ENCODE measurements at regions of chr2 and their contacts with region 1.

Region 1: GRCh38 chr2:240566203-240567136 is 1.8 kb upstream of the RNPEPL1 start:
- DNase-seq: peak; percentile 84 to 97
- H3K4me3 ChIP-seq: peak overlapping the region; percentile 71 to 85
- H3K27ac ChIP-seq: peak overlapping the region; percentile 91 to 96
- H3K4me1 ChIP-seq: peaks cover 16 to 32% of the 10 kb centered on the region in 2 donors
- H3K27me3 ChIP-seq: no peaks in the 10 kb centered on the region
- CTCF ChIP-seq: peak; percentile 59 to 76 (median 71)

Region 2: DNA sequence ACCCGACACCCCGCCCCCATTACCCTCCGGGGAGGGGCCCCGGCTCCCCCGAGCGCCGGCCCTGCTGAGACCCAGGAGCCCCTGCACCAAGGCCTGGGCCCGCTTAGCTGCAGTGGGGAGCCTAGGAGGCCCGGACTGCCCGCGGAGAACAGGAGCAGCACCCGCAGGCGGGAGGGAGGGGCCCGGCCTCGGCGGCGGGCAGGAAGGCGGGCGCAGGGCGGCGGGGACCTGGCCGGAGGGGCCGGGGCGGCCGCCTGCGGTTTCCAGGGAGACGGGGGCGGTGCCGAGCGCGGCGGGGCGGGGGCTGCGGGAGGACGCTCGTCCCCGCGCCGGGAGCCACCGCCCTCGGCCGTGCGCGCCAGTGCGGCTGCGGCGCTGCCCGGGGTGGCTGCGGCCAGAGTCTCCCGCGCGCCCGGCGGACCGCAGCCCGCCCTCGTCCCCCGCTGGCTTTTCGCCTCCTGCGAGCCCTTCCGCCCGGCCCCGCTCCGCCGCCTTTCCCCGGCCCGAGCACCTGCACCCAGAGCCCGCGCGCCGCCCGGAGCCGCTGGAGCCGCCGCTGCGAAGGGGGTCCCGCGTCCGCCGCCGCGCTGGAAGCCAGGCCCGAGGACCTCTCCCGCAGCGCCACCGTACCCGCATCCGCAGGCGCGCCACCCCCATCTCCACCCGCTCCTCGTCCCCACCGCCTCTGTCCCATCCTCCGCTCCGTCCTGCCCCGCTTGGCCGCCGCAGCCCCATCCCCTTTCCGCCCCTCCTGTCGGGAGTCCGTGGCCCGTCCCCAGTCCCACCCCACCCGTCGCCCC is 113.8 kb before region 1 on chr2:
- intact Hi-C with region 1: loop called (anchors 2 kb)
- DNase-seq: no peak
- H3K4me3 ChIP-seq: peak overlapping the region; percentile 67 to 90
- H3K27ac ChIP-seq: no peak overlapping the region
- H3K4me1 ChIP-seq: peaks cover 10 to 25% of the 10 kb centered on the region in 2 donors
- H3K27me3 ChIP-seq: no peaks in the 10 kb centered on the region
- CTCF ChIP-seq: no peak

Region 3: DNA sequence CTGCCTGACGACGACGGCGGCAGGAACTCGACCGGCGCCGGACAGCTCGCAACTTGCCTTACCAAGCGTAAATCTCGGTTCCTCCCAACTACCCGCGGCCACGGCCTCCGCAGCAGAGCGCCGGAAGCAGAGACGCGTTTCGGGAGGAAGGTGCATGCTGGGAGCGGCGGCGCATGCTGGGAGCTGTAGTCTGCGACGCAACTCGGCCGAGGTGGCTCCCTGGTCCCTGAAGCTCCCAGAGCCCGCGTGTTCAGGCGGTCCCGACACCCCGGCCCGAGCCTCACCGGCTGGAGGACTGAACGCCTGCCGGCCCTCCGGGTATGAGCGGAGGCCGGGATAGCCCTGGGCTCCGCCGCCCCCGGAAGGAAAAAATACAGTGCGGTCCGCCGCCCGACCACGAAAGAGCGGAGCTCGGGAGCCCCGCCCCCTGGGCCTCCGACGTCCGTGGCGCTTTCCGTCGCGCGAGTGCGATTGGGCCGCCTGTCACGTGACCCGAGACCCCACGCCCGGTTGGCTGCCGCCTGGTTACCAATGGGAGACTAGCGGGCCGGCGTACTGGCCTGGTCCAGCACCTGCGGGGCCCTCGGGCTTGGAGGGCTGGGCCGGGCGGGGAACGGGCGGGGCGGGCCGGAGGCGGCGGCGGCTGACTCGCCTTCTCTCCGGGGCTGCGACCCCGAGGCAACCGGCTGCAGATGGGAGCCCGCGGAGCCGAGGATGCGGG is 19.9 kb after region 1 on chr2 and contains the start of gene CAPN10:
- intact Hi-C with region 1: loop called (anchors 1 kb)
- DNase-seq: peak; percentile 87 to 98
- H3K4me3 ChIP-seq: peak within 1 kb of the TSS; percentile 97 to 99
- H3K27ac ChIP-seq: peak within 1 kb of the TSS; percentile 94 to 96
- H3K4me1 ChIP-seq: peaks cover 20 to 28% of the 10 kb centered on the region in 2 donors
- H3K27me3 ChIP-seq: no peaks in the 10 kb centered on the region
- CTCF ChIP-seq: no peak
- total RNA-seq, gene CAPN10: 27.8 TPM

Region 4: DNA sequence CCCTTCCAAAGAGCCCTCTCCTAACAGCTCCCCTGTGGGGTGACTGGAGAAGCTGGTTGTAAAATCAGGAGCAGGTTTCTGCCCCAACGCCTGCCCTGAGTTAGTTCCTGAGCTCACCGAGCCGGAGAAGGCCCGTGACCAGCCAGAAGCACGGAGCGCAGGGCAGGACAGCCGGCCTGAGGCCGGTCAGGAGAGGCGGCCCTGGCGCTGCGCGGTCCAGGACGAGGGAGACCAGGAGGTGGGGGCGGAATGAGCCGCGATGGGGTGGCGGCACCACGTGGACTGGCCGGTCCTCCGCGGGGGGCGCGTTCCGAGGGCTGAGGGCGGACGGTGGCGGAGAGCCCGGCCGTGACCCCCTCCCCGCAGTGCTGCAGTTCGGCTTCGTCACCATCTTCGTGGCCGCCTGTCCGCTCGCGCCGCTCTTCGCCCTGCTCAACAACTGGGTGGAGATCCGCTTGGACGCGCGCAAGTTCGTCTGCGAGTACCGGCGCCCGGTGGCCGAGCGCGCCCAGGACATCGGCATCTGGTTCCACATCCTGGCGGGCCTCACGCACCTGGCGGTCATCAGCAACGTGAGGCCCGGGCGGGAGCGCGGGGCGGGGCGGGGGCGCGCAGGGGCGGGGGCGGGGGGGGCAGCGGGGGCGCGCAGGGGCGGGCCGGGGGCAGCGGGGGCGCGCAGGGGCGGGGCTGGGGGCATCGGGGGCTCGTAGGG is 651.0 kb after region 1 on chr2:
- intact Hi-C with region 1: loop called (anchors 5 kb)
- DNase-seq: peak in 1 of 2 donors; percentile 77
- H3K4me3 ChIP-seq: peak overlapping the region; percentile 40 to 65
- H3K27ac ChIP-seq: peak overlapping the region; percentile 78 to 90
- H3K4me1 ChIP-seq: peaks cover 0 to 7% of the 10 kb centered on the region in 2 donors
- H3K27me3 ChIP-seq: no peaks in the 10 kb centered on the region
- CTCF ChIP-seq: no peak

Region 5: GRCh38 chr2:241432824-241433448 is 866.5 kb after region 1 on chr2:
- intact Hi-C with region 1: no loop called
- DNase-seq: no peak
- H3K4me3 ChIP-seq: no peak overlapping the region
- H3K27ac ChIP-seq: no peak overlapping the region
- H3K4me1 ChIP-seq: no peaks in the 10 kb centered on the region
- H3K27me3 ChIP-seq: no peaks in the 10 kb centered on the region
- CTCF ChIP-seq: no peak